Aorta (tissue), 5 donors: ENCODE measurements at regions of chr5 and their contacts with region 1.

Region 1: DNA sequence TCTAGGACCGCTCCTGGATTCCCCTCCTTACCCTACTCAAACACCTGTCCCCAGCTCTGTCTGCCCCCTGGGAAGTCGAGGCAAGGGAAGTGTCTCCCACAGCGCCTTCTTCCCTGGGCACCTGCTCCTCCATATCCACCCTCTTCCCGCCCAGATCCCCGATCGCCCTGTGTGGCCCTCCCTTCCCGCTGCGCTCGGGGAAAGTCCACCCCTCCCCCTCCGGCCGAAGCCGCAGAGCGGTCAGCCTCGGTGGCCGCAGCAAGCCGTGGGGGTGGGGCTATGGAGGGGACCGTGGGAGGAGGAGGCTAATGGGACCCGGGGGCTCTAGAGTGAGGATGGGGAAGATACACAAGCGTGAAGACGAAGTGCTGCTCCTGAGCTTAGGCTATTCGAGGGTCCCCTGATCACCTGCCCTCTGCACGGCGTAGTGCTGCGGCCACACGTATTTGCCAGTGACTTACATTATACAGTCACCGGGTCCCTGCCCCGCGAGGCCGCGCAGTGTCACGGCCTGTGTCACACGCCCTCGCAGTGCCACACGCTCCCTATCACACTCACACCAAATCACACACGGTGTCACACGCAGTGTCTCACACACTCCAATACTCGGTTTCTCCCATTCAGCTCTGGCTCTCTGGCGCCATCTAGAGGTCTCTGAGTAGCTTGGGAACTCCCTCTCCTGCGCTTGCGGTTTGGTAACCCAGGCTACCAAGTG is 658 bp upstream of the PCDH1 start:
- DNase-seq: peak; percentile 93 to 94
- ATAC-seq: peak; percentile 93
- H3K4me3 ChIP-seq: peak overlapping the region; percentile 37 to 47
- H3K27ac ChIP-seq: no peak overlapping the region
- H3K4me1 ChIP-seq: peaks cover 0 to 1% of the 10 kb centered on the region in 2 donors
- H3K27me3 ChIP-seq: no peaks in the 10 kb centered on the region

Region 2: DNA sequence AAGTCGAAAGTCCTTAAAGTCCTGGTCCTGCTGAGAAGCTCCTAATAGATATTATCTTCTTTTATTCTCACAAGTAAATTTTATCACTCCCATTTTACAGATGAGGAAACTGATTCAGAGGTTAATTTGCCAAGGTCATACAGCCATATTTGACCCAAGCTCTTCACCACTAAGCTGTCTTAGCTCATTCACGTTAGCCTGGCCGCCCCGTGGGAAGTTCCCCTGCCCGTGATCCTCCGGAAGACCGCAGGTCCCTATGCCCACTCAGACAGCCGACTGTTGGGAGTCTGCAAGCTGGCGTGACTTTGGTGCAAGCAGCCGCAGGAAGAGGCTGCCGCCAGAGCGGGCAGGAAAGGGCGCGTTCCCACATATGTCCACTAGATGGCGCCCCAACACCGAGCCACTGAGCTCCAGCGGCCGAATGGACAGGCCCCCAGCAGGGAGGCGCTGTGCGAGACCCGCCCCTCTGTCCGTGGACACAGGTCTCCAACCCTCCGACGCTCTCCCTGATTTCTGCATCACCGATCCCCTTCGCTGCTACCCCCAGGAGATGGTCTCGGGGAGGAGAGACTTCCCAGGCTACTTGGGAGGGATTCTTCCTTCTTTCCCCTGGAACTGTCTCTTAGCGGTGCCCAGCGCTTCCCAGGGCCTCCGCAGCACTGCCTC is 186.9 kb before region 1 on chr5:
- intact Hi-C with region 1: loop called in 1 of 2 experiments (anchors 2 kb)
- DNase-seq: peak; percentile 89 to 94
- ATAC-seq: peak; percentile 94
- H3K4me3 ChIP-seq: no peak overlapping the region
- H3K27ac ChIP-seq: no peak overlapping the region
- H3K4me1 ChIP-seq: no peaks in the 10 kb centered on the region
- H3K27me3 ChIP-seq: no peaks in the 10 kb centered on the region

Region 3: GRCh38 chr5:141701360-141702119 is 177.3 kb before region 1 on chr5:
- intact Hi-C with region 1: loop called (anchors 1 to 2 kb)
- DNase-seq: no peak
- ATAC-seq: no peak
- H3K4me3 ChIP-seq: no peak overlapping the region
- H3K27ac ChIP-seq: no peak overlapping the region
- H3K4me1 ChIP-seq: no peaks in the 10 kb centered on the region
- H3K27me3 ChIP-seq: peaks cover 0 to 3% of the 10 kb centered on the region in 2 donors

Region 4: DNA sequence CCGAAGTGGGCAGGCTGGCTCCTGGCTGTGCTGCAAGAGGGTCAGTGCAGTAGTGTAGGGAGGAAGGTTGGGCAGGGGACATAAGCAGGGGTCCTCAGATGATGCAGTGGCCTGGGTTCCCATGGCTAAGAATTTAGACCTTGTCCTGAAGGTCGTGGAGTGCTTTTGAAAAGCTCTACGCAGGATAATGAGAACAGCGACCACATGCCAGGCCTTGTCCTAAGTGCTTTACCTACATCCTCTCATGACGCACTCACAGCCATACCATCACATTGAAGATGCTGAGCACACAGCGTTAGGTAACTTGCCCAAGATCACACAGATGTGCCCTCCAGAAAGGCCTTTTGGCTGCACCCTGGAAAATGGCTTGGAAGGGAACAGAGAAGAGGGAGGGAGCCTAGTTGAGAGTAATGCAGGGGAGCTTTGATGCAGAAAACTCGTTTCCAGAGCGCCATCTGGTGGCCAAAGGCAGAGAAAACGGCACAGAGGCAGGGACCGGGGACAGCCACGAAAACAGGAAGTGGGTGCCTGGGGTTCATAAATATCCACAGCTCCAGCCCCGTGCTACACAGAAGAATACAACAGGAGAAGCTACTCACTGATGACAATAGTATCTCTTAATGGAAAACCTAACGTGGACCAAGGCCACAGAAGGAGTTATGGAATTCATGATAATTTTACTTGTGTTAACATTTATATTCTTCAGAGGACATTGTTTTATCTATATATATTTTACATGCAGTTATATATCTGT is 81.8 kb after region 1 on chr5:
- intact Hi-C with region 1: loop called in 1 of 2 experiments (anchors 5 kb)
- DNase-seq: peak; percentile 95
- ATAC-seq: peak; percentile 89
- H3K4me3 ChIP-seq: no peak overlapping the region
- H3K27ac ChIP-seq: no peak overlapping the region
- H3K4me1 ChIP-seq: no peaks in the 10 kb centered on the region
- H3K27me3 ChIP-seq: no peaks in the 10 kb centered on the region